ENCODE measurements at regions of chr10 and their contacts with region 1.

Region 1: GRCh38 chr10:102229810-102230263 is 3.7 kb downstream of the ELOVL3 start:
- DNase-seq: peak; percentile 79
- H3K4me3 ChIP-seq: peak overlapping the region in 1 of 2 donors; percentile 14
- H3K27ac ChIP-seq: no peak overlapping the region
- H3K4me1 ChIP-seq: peaks cover 0 to 18% of the 10 kb centered on the region in 2 donors
- H3K27me3 ChIP-seq: peaks cover 13 to 18% of the 10 kb centered on the region in 2 donors
- CTCF ChIP-seq: peak; percentile 90 to 98 (median 96)
- POLR2A ChIP-seq: no peak

Region 2: DNA sequence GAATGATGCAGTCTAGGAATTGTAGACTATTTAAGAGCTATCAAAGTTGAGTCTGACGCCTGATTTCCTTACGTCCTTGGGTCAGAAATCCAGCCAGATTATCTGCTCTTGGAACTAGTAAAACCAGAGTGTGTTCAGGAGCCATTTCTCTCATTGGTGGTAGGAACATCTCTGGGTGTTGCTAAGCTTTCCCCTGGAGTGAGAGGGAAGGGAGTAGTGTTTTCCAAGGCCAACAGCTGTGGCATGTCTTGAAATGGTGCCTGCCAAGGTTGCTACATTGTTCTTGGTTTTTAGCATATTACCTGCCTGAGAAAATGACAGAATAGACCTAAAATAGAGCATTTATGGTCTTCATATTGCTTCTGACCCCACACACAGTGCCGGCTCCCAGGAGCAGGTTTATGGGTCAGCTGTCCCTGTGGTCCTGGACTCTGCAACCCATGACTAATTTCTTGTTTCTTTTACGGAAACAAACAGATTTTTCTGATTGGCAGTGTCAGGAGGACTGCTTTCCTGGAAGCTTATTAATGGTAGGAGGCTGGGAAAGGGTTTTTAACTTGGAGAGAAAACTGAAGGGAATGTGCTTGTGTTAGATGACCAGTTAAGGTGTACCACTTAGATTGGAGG is 33.0 kb after region 1 on chr10:
- intact Hi-C with region 1: no loop called
- DNase-seq: no peak
- H3K4me3 ChIP-seq: no peak overlapping the region
- H3K27ac ChIP-seq: no peak overlapping the region
- H3K4me1 ChIP-seq: peaks cover under 1 to 8% of the 10 kb centered on the region in 2 donors
- H3K27me3 ChIP-seq: no peaks in the 10 kb centered on the region
- CTCF ChIP-seq: no peak
- POLR2A ChIP-seq: no peak

Region 3: GRCh38 chr10:102352066-102352715 is 122.4 kb after region 1 on chr10:
- intact Hi-C with region 1: loop called (anchors 2 kb)
- DNase-seq: peak; percentile 54
- H3K4me3 ChIP-seq: no peak overlapping the region
- H3K27ac ChIP-seq: no peak overlapping the region
- H3K4me1 ChIP-seq: no peaks in the 10 kb centered on the region
- H3K27me3 ChIP-seq: no peaks in the 10 kb centered on the region
- CTCF ChIP-seq: peak; percentile 71 to 85 (median 76)
- POLR2A ChIP-seq: no peak